Stomach (tissue), 19 donors: ENCODE measurements at regions of chr9 and their contacts with region 1.

Region 1: DNA sequence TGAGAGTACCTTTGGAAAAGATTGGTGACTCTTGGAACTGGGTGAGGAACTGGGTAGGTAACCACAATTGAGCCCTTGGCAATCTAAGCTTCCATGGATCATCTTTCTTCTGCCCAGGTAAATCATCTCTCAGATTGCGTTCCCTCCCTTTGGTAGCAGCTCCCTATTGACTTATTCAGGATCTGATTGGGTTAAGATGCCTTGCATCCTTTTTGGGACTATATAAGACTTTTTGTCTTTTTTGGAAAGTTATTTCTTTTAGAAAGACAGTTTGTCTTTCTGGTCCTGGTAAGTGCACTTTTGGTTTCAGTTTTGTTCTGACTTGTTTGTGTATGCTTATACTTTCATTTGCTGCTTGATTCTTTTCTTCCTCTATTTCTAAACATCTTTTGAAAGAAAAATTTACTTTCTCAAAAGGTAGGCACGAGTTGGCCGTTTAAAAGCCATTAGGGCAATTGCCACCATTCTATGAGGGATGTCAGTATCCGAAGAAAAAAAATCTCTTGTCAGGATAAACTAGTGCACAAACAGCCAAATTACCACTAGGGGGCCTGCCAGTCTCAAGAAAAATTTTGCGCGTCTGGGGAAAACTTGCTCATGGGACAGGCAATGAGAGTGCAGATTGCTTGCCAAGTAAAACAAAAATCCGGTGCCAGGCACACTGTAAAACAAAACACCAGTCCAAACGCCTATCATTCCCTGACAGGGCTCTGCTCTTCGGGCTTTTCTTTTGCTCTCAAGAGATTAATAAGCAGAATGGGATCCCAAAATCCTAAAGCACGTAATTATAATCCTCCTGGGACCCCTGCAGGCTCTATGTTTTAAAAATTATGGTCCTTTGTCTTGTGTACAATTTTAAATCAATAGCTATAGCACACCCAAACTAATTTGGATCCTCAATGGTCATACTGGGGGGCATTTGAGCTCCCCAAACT is 12.8 kb downstream of the OR1J1 start:
- DNase-seq: peak; percentile 83 to 91
- H3K4me3 ChIP-seq: peak overlapping the region; percentile 29 to 49 (median 46)
- H3K27ac ChIP-seq: peak overlapping the region in 4 of 5 donors; percentile 36 to 70 (median 57)
- H3K4me1 ChIP-seq: peaks cover 0 to 21% (median 13%) of the 10 kb centered on the region in 4 donors
- H3K27me3 ChIP-seq: no peaks in the 10 kb centered on the region
- CTCF ChIP-seq: peak in 5 of 7 experiments; percentile 72 to 90 (median 80)
- EP300 ChIP-seq: no peak
- POLR2A ChIP-seq: no peak

Region 2: DNA sequence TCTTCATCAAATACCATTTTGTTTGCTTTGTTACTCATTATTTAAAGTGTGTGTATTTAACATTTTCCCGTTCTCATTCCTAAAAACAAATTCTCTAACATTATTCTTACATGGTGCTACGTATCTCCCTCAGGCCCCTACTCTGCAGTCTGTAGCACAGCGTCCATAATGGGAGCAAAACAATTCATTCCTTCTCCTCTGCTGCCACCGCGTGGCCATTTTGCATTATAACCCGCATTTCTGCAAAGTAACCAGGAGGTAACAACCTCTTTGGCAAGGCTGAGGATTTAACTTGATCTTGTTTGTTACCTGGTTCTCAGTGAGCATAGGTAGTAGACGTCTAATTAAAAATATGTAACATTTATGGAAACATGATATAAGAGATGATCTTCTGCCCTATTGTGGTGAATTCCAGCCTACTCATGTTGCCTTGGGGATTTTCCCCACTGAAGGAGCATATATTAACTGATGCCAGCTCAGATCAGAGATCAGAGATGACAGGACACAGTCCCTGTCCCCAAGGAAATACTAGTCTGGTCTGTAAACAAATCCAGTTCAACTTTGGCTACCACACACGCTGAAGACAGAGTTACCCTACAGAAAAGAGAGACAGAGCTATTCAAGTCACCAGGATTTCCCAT is 345.5 kb after region 1 on chr9:
- intact Hi-C with region 1: loop called (anchors 5 kb)
- DNase-seq: peak; percentile 80 to 93
- H3K4me3 ChIP-seq: peak overlapping the region in 1 of 4 donors; percentile 1
- H3K27ac ChIP-seq: peak overlapping the region; percentile 46 to 67 (median 57)
- H3K4me1 ChIP-seq: peaks cover 0 to 24% (median 11%) of the 10 kb centered on the region in 4 donors
- H3K27me3 ChIP-seq: no peaks in the 10 kb centered on the region
- CTCF ChIP-seq: peak in 5 of 7 experiments; percentile 45 to 91 (median 77)
- EP300 ChIP-seq: no peak
- POLR2A ChIP-seq: no peak

Region 3: GRCh38 chr9:122988919-122989621 is 524.2 kb after region 1 on chr9:
- intact Hi-C with region 1: loop called (anchors 10 kb)
- DNase-seq: no peak
- H3K4me3 ChIP-seq: no peak overlapping the region
- H3K27ac ChIP-seq: no peak overlapping the region
- H3K4me1 ChIP-seq: peaks cover 0 to 10% (median 4%) of the 10 kb centered on the region in 4 donors
- H3K27me3 ChIP-seq: no peaks in the 10 kb centered on the region
- CTCF ChIP-seq: no peak
- EP300 ChIP-seq: no peak
- POLR2A ChIP-seq: no peak

Region 4: GRCh38 chr9:123349691-123350480 is 885.0 kb after region 1 on chr9:
- intact Hi-C with region 1: loop called (anchors 10 kb)
- DNase-seq: peak; percentile 47 to 84
- H3K4me3 ChIP-seq: no peak overlapping the region
- H3K27ac ChIP-seq: no peak overlapping the region
- H3K4me1 ChIP-seq: peaks cover 0 to 16% (median 14%) of the 10 kb centered on the region in 4 donors
- H3K27me3 ChIP-seq: peaks cover 0 to 39% (median 14%) of the 10 kb centered on the region in 3 donors
- CTCF ChIP-seq: peak in 5 of 7 experiments; percentile 74 to 96 (median 91)
- EP300 ChIP-seq: no peak
- POLR2A ChIP-seq: no peak